ENCODE measurements at regions of chr2 and their contacts with region 1.

Region 1: DNA sequence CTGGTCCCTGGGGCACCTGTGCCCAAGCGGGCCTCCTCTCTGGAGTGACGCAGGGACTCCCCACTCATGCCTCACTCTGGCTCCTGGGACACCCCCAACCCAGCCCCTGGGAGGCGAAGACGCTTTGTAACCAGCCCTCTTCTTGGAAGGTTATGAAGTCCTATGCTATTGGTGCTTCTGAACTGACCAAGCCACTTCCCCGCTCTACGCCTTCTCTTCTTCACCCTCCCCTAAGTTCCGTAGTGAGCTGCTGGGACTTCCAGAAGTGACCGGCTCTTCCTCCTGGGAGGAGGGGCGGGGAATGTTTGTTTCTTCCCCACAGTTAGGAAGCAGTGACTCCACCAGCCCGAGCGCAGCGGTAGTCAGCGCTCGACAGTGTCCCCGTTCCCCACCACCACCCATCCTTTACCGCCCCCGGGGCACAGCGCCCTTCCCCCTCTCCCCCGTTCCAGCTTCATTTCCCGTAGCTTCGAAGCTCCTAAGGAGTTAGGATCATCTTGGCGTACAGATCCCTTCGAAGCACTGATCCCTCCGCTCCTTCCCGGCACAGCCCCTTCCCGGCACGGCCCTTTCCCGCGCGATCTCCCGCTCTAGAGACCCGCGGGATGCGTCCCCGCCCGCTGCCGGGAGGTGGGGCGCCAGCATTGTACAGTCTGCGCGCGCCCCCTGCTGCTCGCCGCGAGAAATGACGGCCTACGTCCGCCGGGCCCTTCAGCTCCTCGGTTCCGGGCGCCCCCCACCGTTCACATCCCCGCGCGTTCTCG is 25.3 kb upstream of the NOTO start:
- DNase-seq: peak; percentile 95
- H3K4me3 ChIP-seq: peak overlapping the region; percentile 39 to 60 (median 51)
- H3K27ac ChIP-seq: peak overlapping the region; percentile 66 to 79 (median 71)
- H3K4me1 ChIP-seq: peaks cover 0 to 29% (median 27%) of the 10 kb centered on the region in 4 donors
- H3K27me3 ChIP-seq: peaks cover 6 to 71% (median 7%) of the 10 kb centered on the region in 3 donors
- CTCF ChIP-seq: peak; percentile 94 to 100 (median 98)
- EP300 ChIP-seq: no peak
- POLR2A ChIP-seq: no peak

Region 2: GRCh38 chr2:72770879-72771461 is 406.1 kb before region 1 on chr2:
- intact Hi-C with region 1: loop called (anchors 5 kb)
- DNase-seq: peak; percentile 72
- H3K4me3 ChIP-seq: no peak overlapping the region
- H3K27ac ChIP-seq: no peak overlapping the region
- H3K4me1 ChIP-seq: no peaks in the 10 kb centered on the region
- H3K27me3 ChIP-seq: no peaks in the 10 kb centered on the region
- CTCF ChIP-seq: peak; percentile 64 to 85 (median 70)
- EP300 ChIP-seq: no peak
- POLR2A ChIP-seq: no peak

Region 3: DNA sequence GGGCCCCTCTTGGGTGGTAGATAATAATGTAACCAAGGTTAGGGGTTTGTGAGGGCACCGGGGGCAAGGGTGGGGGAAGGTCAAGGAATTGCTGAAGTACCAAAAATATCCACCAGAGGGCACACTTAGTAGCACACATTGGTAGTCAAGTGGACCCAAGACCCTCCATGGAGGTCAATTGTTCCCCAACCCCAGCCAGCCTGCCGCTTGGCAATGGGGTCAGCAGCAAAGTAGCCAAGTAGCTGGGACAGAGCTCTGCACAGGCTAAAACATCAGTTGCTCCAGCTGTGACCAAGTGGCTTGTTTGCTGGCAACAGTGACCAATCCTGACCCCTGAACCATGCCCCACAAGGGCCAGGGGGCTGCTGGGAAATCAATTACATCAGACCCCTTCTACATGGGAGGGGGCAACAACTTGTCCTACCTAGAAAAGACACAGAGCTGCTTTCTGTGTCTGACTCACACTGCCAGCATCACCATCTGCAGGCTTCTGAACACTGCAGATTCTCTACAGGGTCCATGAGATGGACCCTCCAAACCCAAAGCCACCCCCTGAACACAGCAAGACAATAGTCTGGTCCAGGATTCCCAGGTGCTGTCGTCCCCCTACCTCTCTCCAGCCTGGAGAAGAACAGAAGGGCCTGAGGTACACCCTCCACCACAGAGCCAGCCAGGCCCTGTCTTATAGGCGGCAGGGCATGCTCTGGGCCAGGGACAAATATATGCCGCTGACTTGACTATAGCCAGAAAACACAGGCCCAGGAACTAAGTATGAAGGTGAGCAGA is 183.7 kb before region 1 on chr2:
- intact Hi-C with region 1: loop called (anchors 5 kb)
- DNase-seq: peak; percentile 35
- H3K4me3 ChIP-seq: no peak overlapping the region
- H3K27ac ChIP-seq: no peak overlapping the region
- H3K4me1 ChIP-seq: no peaks in the 10 kb centered on the region
- H3K27me3 ChIP-seq: no peaks in the 10 kb centered on the region
- CTCF ChIP-seq: peak; percentile 37 to 85 (median 68)
- EP300 ChIP-seq: no peak
- POLR2A ChIP-seq: no peak

Region 4: DNA sequence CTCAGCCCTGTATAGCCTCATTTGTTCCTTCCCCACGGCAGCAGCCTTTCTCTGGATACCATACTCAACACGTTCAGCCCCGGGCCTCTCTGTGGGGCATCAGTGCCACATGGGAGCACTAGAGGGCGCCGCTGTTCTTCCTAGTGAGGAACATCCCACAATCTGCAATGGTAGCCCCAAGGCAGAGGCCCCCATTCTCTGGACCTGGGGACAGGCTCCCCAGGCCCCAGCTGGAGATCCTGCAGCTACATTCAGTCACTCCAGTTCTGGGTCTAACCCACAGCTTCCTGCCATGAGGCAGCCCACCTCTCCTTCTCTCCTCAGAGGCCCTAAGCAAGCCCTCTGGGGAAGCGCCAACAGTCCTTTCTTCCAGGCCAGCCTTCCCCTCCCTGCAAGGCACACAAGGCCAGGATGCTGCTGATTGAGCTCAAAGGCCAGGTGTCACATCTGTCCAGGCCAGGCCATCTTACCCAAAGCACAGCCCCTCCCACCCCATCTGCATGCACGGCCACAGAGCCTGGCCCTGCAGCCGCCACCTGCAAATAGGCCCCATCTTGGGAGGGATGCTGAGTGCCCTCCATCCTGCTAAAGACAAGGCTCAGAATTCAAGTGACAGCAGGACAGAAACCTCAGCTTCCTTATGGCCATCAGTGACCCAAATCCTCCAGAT is 91.2 kb before region 1 on chr2:
- intact Hi-C with region 1: loop called (anchors 5 kb)
- DNase-seq: peak; percentile 90
- H3K4me3 ChIP-seq: no peak overlapping the region
- H3K27ac ChIP-seq: no peak overlapping the region
- H3K4me1 ChIP-seq: peaks cover 0 to 51% (median 30%) of the 10 kb centered on the region in 4 donors
- H3K27me3 ChIP-seq: no peaks in the 10 kb centered on the region
- CTCF ChIP-seq: peak; percentile 59 to 94 (median 82)
- EP300 ChIP-seq: no peak
- POLR2A ChIP-seq: no peak

Region 5: DNA sequence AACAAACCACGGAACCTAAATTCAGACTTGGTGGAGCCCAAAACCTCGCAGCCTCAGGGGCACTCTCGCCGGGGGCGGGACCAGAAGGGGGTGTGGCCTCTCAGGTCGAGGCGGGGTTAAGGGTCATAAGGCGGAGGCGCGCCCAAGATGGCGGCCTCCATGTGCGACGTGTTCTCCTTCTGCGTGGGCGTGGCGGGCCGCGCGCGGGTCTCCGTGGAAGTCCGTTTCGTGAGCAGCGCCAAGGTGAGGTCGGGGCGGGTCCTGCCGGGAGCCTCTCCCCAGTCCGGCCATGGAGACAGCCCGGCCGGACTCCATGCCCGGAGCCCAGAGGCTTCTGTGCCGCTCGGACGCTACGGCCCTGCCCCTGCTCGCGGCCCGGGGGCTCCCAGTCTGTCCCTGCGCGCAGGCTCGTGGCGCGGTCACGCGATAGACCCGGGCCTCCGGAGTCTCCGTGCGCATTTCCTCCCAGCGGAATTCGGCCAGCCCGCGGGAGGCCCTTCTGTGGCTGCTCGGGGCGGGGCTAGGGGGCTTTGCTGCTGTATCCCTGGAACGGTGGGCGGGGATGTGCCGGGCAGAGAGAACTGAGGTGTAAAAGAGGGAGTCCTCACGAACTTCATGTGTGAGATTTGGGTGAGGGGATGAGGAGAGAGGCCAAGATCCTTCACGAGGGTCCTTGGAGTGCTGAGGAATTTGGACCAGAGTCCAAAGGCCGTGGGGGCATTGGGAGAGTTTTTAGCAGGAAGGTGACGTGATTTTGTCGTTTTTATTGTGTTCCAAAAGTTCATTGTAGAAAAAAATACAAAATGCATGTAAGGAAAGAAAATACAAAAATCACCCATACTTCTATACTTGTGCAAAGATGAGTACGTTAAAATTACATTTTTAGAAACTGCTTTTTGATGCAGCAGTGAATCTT is 37.3 kb after region 1 on chr2 and contains the start of gene SMYD5:
- intact Hi-C with region 1: loop called (anchors 2 kb)
- DNase-seq: peak; percentile 91
- H3K4me3 ChIP-seq: peak within 1 kb of the TSS; percentile 87 to 95 (median 91)
- H3K27ac ChIP-seq: peak within 1 kb of the TSS; percentile 66 to 76 (median 72)
- H3K4me1 ChIP-seq: peaks cover 0 to 32% (median 9%) of the 10 kb centered on the region in 4 donors
- H3K27me3 ChIP-seq: no peaks in the 10 kb centered on the region
- CTCF ChIP-seq: no peak
- EP300 ChIP-seq: no peak
- POLR2A ChIP-seq: peak in 1 of 2 donors; percentile 17
- total RNA-seq, gene SMYD5: 6.9 to 12.4 (median 7.9) TPM